GM23248 (cell line): ENCODE measurements at regions of chr3 and their contacts with region 1.

Region 1: GRCh38 chr3:59575113-59576001 is 525.5 kb upstream of the CFAP20DC start:
- DNase-seq: peak; percentile 76
- H3K4me3 ChIP-seq: no peak overlapping the region
- H3K27ac ChIP-seq: no peak overlapping the region
- H3K4me1 ChIP-seq: peaks cover 20% of the 10 kb centered on the region
- H3K27me3 ChIP-seq: no peaks in the 10 kb centered on the region

Region 2: DNA sequence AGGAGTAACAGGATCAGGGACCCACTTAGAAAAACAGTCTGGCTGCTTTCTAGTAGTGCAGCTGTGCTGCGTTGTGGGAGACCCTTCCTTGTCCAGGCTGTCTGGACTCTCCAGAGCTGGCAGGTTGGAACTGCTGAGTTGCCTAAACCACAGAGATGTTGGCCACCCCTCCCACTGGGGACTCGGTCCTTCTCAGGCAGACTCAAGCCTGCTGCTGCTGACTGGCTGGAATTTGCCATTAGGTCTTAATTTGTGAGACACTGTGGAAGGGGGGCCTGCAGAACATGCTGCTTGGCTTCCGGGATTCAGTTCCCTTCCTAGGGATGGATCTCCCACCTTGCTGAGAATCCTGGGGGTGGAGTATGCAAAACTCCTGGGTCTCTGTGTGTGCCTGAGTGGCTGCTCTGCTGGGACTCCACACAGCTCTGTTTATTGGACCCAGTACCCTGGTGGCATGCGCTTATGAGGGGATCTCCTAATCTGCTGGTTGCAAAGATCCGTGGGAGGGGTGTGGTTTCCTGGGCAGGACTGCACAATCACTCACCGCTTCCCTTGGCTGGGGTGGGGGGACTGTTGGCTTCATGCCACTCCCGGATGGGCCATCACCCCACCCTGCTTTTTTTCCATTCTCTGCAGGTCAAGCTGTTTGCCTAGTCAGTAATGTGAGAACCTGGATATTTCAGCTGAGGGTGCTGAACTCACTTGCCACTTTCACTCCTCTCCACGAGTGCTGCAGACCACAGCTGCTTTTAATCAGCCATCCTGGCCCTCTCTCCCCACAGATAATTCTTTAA is 676.0 kb before region 1 on chr3:
- in situ Hi-C with region 1: no loop called
- DNase-seq: peak; percentile 12
- H3K4me3 ChIP-seq: no peak overlapping the region
- H3K27ac ChIP-seq: no peak overlapping the region
- H3K4me1 ChIP-seq: 0 out of 2 replicates have a peak, but pooled peaks cover 5% of the 10 kb centered on the region
- H3K27me3 ChIP-seq: no peaks in the 10 kb centered on the region

Region 3: GRCh38 chr3:59386165-59386564 is 189.2 kb before region 1 on chr3:
- in situ Hi-C with region 1: no loop called
- DNase-seq: peak; percentile 24
- H3K4me3 ChIP-seq: no peak overlapping the region
- H3K27ac ChIP-seq: no peak overlapping the region
- H3K4me1 ChIP-seq: no peaks in the 10 kb centered on the region
- H3K27me3 ChIP-seq: no peaks in the 10 kb centered on the region

Region 4: DNA sequence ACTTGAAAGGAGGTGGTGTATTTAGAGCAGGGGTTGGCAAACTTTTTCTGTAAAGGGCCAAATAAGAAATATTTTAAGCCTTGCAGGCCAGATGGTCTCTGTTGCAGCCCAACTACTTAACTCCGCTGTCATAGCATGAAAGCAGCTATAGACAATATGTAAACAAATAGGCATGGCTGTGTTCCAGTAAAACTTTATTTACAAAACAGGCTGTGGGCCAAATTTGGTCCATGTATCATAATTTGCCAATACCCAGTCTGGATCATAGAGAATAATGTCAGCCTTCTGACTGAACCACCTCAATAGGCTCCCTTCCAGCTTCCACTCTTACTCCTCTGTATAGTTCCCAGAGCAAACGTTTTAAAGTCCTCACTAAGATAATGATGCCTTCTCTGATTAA is 113.3 kb after region 1 on chr3:
- in situ Hi-C with region 1: no loop called
- DNase-seq: no peak
- H3K4me3 ChIP-seq: no peak overlapping the region
- H3K27ac ChIP-seq: no peak overlapping the region
- H3K4me1 ChIP-seq: no peaks in the 10 kb centered on the region
- H3K27me3 ChIP-seq: no peaks in the 10 kb centered on the region

Region 5: DNA sequence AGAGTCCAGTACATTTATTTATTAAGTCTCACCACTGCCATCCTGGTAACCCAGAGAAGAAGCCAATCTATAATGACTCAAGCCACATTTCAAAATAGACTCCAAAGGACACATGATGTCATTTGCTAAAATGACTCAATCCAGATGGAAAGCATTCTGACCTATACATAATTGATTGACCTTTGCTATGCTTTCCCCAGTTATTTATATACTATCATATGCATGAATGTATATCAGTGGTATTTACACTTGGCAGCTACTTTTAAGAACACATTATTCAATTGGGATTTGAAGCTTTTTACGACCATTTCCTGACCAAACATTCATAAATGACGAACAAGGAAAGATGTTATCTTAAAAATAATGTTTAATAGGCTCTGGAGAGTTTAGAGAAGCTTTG is 1378.7 kb after region 1 on chr3:
- in situ Hi-C with region 1: loop called (anchors 25 kb)
- DNase-seq: peak; percentile 80
- H3K4me3 ChIP-seq: no peak overlapping the region
- H3K27ac ChIP-seq: peak overlapping the region; percentile 36; the same call in 1 of the 2 replicates
- H3K4me1 ChIP-seq: peaks cover 17% of the 10 kb centered on the region
- H3K27me3 ChIP-seq: no peaks in the 10 kb centered on the region